ENCODE measurements at regions of chr5 and their contacts with region 1.

Region 1: DNA sequence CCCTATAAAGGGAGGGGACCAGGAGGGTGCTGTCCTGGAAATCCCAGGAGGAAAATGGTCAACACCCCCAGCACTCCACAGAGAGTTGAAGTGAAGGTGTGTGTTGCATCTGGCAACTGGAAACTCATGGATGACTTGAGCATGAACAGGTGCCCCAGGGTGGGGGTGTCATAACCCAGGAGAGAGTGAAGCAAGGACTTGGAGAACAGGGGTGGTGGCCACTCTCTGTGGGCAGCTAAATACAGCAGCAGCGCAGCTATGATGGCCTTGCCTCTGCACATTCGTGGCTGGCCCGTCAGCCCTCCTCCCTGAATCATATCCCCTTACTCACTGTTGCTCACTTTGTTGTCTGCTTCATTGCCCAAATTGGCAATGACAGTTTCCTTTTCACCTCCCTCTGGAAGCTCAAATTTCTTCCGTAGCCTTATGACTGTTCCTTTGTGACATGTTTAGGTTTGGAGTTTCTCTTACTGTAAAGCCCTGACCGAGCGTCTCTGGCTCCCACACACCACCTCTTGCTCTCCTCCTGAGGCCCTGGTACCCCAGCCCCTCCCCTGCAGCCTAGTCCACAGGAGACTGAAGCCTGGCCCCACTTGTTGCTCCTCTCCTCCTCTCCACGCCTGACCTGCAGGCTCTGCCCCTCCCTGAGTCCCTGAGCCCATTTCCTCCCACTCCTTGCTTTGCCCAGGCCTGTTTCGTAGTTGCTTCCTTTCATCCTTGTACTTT is 185.8 kb downstream of the CD180 start:
- DNase-seq: peak in 2 of 5 donors; percentile 26 to 44
- ATAC-seq: peak in 3 of 4 donors; percentile 14 to 31 (median 20)
- H3K4me3 ChIP-seq: peak overlapping the region in 1 of 12 donors; percentile 19
- H3K27ac ChIP-seq: peak overlapping the region in 11 of 12 donors; percentile 16 to 80 (median 41)
- H3K4me1 ChIP-seq: peaks cover 0 to 96% (median 83%) of the 10 kb centered on the region in 12 donors
- H3K27me3 ChIP-seq: no peaks in the 10 kb centered on the region
- CTCF ChIP-seq: no peak
- POLR2A ChIP-seq: no peak

Region 2: GRCh38 chr5:67047160-67047559 is 36.3 kb after region 1 on chr5:
- intact Hi-C with region 1: loop called in 7 of 10 experiments (anchors 5 kb)
- DNase-seq: peak; percentile 66 to 86 (median 78)
- ATAC-seq: peak; percentile 67 to 94 (median 88)
- H3K4me3 ChIP-seq: no peak overlapping the region
- H3K27ac ChIP-seq: peak overlapping the region in 11 of 12 donors; percentile 4 to 60 (median 28)
- H3K4me1 ChIP-seq: peaks cover 11 to 78% (median 49%) of the 10 kb centered on the region in 12 donors
- H3K27me3 ChIP-seq: no peaks in the 10 kb centered on the region
- CTCF ChIP-seq: no peak
- POLR2A ChIP-seq: no peak

Region 3: DNA sequence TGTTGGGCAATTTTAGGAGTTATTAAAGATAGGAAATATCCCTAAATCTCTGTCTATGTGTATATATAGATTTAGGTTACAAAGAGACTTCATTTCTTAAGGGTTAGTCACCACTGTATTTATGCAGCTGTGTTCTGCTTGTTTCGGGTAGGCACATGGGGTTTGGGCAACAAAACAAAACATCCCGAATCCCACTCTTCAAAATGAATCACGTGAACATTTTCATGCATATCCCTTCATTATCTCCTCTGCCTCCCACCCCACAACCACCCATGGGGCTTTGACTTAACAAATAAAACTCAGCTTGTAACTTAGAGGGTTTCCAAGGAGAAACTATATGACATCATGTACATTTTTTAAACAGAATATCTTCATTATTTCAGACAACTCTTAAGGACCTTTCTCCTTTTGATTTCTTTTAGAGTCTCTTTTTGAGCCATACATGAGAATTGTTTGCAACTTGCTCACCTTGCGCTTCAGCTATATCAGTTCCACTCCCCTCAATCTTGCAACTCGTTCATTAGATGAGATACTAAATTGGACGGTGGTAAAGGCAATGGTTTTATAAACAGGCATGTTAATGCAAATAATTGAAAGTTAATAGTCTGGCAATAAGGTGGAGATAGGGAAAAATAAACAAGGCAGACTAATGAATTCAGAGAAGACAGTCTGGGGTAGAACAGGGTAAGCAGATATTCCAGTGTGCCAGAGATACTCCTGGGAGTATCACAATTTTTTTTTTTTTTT is 49.1 kb after region 1 on chr5:
- intact Hi-C with region 1: loop called in 2 of 10 experiments (anchors 5 to 10 kb)
- DNase-seq: no peak
- ATAC-seq: peak in 1 of 4 donors; percentile 16
- H3K4me3 ChIP-seq: no peak overlapping the region
- H3K27ac ChIP-seq: peak overlapping the region in 5 of 12 donors; percentile 1 to 41 (median 23)
- H3K4me1 ChIP-seq: peaks cover 5 to 65% (median 33%) of the 10 kb centered on the region in 12 donors
- H3K27me3 ChIP-seq: no peaks in the 10 kb centered on the region
- CTCF ChIP-seq: no peak
- POLR2A ChIP-seq: no peak

Region 4: GRCh38 chr5:67095346-67096171 is 84.7 kb after region 1 on chr5:
- intact Hi-C with region 1: loop called in 5 of 10 experiments (anchors 5 to 10 kb)
- DNase-seq: peak; percentile 73 to 84 (median 84)
- ATAC-seq: peak; percentile 93 to 98 (median 96)
- H3K4me3 ChIP-seq: peak overlapping the region in 8 of 12 donors; percentile 16 to 43 (median 28)
- H3K27ac ChIP-seq: peak overlapping the region; percentile 63 to 83 (median 76)
- H3K4me1 ChIP-seq: peaks cover 2 to 63% (median 47%) of the 10 kb centered on the region in 12 donors
- H3K27me3 ChIP-seq: no peaks in the 10 kb centered on the region
- CTCF ChIP-seq: no peak
- POLR2A ChIP-seq: no peak

Region 5: DNA sequence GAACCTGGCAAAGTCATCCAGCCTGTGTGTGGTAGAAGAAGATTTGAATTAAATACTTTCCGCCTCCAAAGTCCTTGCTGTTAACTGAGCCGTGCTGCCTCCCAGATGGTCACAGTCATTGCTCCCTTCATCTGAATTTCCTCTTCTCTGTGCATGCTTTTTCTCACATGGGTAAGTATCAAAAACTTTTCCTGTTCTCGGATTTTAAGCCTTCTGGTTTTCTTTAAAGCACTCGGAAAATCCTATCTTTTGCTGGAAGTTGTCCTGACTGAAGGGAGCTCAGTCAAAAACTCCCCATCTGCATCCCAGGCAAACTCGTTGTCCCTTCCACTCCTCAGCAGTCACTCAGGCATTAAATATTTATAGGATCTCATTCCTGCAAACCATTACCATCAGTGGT is 914.7 kb after region 1 on chr5:
- intact Hi-C with region 1: no loop called
- DNase-seq: no peak
- ATAC-seq: no peak
- H3K4me3 ChIP-seq: no peak overlapping the region
- H3K27ac ChIP-seq: no peak overlapping the region
- H3K4me1 ChIP-seq: no peaks in the 10 kb centered on the region
- H3K27me3 ChIP-seq: no peaks in the 10 kb centered on the region
- CTCF ChIP-seq: no peak
- POLR2A ChIP-seq: no peak

Measured in heart left ventricle (tissue), 16 donors.